ENCODE measurements at regions of chr1 and their contacts with region 1.

Region 1: DNA sequence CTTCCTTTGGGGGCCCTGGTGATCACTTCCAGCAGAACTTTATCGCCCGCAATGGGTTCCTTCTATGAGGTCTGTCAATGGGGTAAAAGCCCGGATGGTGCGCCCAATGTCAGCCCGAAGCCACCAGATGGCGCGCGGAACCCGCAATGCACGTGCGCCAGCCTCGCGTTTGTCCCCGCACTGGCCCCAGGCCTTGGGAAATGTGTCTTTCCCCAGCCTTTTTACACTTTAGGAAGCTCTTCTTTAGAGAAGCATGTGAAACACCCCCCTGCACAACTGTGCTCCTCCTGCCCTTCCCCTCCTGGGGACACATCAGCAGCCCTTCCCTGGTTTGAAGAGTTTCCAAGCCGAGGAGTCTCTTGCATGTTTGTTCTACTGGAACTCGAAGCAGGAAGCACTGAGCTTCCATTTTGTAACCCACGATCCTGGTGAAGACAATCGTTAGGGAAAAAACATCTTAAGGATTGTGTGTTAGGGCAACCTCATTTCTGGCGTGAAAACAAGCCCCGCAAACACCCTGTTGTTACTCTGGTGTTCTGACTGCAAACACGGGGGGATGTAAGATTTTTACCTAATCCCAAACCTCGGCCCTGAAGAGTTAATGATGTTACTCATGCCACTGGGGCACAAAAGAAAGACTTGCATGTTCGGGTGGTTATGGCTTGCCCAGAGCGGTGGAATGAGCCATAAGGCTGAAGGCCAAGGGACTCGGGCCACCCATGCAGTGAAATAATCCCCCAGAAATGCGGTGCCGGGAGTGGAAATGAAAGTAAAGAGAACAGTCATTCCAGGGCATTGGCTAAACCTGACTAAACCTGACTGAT is 20.4 kb upstream of the TARBP1 start:
- DNase-seq: peak; percentile 78
- ATAC-seq: peak; percentile 91
- H3K4me3 Mint-ChIP-seq: peak overlapping the region; percentile 55
- H3K27ac Mint-ChIP-seq: peak overlapping the region; percentile 66
- H3K4me1 Mint-ChIP-seq: peaks cover 28% of the 10 kb centered on the region
- H3K27me3 Mint-ChIP-seq: no peaks in the 10 kb centered on the region
- CTCF ChIP-seq: peak; percentile 38

Region 2: GRCh38 chr1:234478481-234479309 is 20.6 kb before region 1 on chr1 and contains the start of gene TARBP1:
- CTCF ChIA-PET with region 1: no interaction called
- POLR2A ChIA-PET with region 1: interaction called, 11 read pairs
- intact Hi-C with region 1: no loop called
- DNase-seq: peak; percentile 82
- ATAC-seq: peak; percentile 66
- H3K4me3 Mint-ChIP-seq: peak within 1 kb of the TSS; percentile 85
- H3K27ac Mint-ChIP-seq: peak within 1 kb of the TSS; percentile 88
- H3K4me1 Mint-ChIP-seq: peaks cover 43% of the 10 kb centered on the region
- H3K27me3 Mint-ChIP-seq: peaks cover 5% of the 10 kb centered on the region
- CTCF ChIP-seq: no peak
- total RNA-seq, gene TARBP1: 27.0 and 30.4 TPM in 2 replicates

Region 3: DNA sequence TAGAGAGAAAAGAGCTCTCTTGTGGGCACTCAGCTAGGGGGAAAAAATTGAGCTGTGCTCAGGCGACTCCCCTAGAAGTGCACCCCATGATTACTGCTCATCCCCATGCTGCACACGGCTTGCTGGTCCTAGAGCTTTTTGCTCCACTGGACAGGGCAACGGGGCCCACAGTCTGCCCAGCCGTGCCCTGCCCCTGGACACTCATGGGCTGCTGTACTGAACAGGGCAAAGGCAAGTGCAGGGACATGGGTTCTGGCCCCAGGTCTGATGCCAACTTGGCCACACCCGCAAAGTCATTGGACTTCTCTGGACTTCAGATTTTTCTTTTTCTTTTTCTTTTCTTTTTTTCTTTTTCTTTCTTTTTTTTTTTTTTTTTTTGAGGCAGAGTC is 22.5 kb after region 1 on chr1:
- CTCF ChIA-PET with region 1: interaction called, 6 read pairs
- POLR2A ChIA-PET with region 1: interaction called, 3 read pairs
- intact Hi-C with region 1: loop called (anchors 1 kb)
- DNase-seq: no peak
- ATAC-seq: no peak
- H3K4me3 Mint-ChIP-seq: no peak overlapping the region
- H3K27ac Mint-ChIP-seq: no peak overlapping the region
- H3K4me1 Mint-ChIP-seq: peaks cover 38% of the 10 kb centered on the region
- H3K27me3 Mint-ChIP-seq: no peaks in the 10 kb centered on the region
- CTCF ChIP-seq: no peak

Region 4: DNA sequence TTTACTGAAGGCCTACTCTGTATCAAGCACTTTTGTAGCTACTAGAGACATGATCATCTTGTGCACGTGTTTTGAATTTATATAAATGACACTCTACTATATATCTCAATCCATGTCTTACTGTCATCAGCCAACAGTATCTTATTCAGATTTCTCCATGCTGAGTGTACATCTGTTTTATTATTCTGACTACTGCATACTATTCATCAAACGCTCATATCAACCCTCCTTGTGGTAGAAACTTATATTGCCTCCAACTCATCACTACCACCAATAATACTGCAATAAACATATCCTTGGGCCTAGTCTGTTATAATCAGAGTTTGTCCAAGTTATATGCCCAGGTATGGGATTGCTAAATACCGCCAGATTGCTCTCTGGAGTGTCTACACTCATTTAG is 192.2 kb after region 1 on chr1:
- CTCF ChIA-PET with region 1: interaction called, 4 read pairs
- POLR2A ChIA-PET with region 1: no interaction called
- intact Hi-C with region 1: loop called (anchors 1 kb)
- DNase-seq: no peak
- ATAC-seq: no peak
- H3K4me3 Mint-ChIP-seq: no peak overlapping the region
- H3K27ac Mint-ChIP-seq: no peak overlapping the region
- H3K4me1 Mint-ChIP-seq: peaks cover 8% of the 10 kb centered on the region
- H3K27me3 Mint-ChIP-seq: no peaks in the 10 kb centered on the region
- CTCF ChIP-seq: no peak

Region 5: GRCh38 chr1:235018161-235018560 is 518.8 kb after region 1 on chr1:
- CTCF ChIA-PET with region 1: interaction called, 6 read pairs
- POLR2A ChIA-PET with region 1: interaction called, 5 read pairs
- intact Hi-C with region 1: loop called (anchors 1 kb)
- DNase-seq: no peak
- ATAC-seq: no peak
- H3K4me3 Mint-ChIP-seq: no peak overlapping the region
- H3K27ac Mint-ChIP-seq: peak overlapping the region; percentile 68
- H3K4me1 Mint-ChIP-seq: peaks cover 72% of the 10 kb centered on the region
- H3K27me3 Mint-ChIP-seq: no peaks in the 10 kb centered on the region
- CTCF ChIP-seq: no peak

Measured in activated B cell treated with CpG ODN at 0.5 μM for 24 hours (primary cell).